Upper lobe of right lung (tissue), 1 donor: ENCODE measurements at regions of chr13 and their contacts with region 1.

Region 1: DNA sequence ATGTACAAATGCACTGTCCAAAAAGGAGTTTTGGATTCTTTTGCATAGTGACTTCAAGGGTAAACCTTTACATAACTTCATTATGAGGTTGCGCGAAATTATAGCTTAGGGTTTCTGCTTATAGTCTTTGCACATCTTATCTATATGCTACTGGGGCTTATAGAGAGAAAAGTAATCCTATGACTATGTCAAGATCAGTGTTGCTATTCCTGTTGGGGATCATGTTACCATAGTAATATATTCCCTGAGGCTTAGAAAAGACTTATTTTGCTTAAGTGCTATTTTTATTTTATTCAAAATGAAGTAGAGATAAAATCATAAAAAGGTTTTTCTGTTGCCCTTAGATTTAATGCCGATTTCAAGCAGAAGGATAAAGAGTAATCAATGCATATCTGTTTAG is 14.7 kb upstream of the POSTN start:
- DNase-seq: no peak
- ATAC-seq: no peak
- H3K4me3 ChIP-seq: no peak overlapping the region
- H3K27ac ChIP-seq: no peak overlapping the region
- H3K4me1 ChIP-seq: no peaks in the 10 kb centered on the region
- H3K27me3 ChIP-seq: no peaks in the 10 kb centered on the region
- CTCF ChIP-seq: no peak

Region 2: DNA sequence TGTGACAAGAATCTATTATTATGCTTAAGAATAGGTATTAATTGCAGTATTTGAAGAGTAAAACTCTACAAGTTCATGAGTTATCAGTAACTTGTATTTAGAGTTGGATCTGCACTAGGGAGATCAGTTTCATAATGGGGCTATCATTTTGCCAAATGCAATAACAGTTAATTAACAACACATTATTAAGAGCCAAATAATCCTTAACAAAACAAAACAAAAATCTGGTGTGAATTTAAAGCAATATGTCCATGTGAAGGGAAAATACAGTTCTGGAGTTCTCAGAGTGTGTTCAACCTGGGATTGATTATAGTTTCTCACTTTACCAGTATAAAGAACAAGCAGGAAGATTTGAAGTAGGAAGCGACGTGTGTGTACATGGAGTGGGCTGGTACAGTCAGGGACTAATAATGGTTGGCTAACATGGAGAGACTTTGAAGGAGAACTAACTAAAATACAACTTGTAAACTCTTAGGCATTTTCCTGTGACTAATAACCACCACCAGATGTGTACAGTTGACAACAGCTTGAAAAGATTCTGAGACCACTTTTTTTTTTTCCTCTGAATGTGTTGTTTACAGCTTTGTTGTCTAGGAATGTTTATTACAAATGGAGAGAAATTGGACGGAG is 73.1 kb before region 1 on chr13:
- intact Hi-C with region 1: no loop called
- DNase-seq: no peak
- ATAC-seq: no peak
- H3K4me3 ChIP-seq: no peak overlapping the region
- H3K27ac ChIP-seq: no peak overlapping the region
- H3K4me1 ChIP-seq: no peaks in the 10 kb centered on the region
- H3K27me3 ChIP-seq: no peaks in the 10 kb centered on the region
- CTCF ChIP-seq: no peak

Region 3: DNA sequence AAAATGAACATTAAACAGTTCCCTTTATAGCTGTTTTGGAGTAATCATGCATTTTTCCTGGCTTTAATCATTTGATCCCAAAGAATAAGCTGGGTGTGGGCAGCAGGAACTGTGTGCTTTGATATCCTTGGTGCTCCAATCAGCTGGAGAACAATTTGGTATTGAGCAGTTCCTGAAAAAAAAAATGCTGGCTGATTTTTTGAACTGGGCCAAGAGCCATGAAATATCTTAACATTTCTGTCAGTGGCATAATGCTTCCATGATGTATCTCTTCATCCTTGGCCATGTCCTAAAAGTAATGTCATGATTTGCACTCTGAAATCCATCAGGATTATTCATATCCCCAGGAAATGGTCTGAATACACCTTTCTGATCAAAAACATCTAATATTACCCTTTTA is 1855.1 kb after region 1 on chr13:
- intact Hi-C with region 1: loop called (anchors 5 kb)
- DNase-seq: no peak
- ATAC-seq: no peak
- H3K4me3 ChIP-seq: no peak overlapping the region
- H3K27ac ChIP-seq: no peak overlapping the region
- H3K4me1 ChIP-seq: no peaks in the 10 kb centered on the region
- H3K27me3 ChIP-seq: no peaks in the 10 kb centered on the region
- CTCF ChIP-seq: no peak